Activated CD4-positive, alpha-beta memory T cell treated with anti-CD3 and anti-CD28 coated beads, Interleukin-2, amount 10 ng/mL, durations not matched to agents 7 days and 5 days (primary cell): ENCODE measurements at regions of chrX and their contacts with region 1.

Region 1: GRCh38 chrX:48737213-48737938 is 24.2 kb upstream of the GLOD5 start:
- DNase-seq: peak; percentile 91
- H3K4me3 Mint-ChIP-seq: peak overlapping the region; percentile 91
- H3K27ac Mint-ChIP-seq: peak overlapping the region; percentile 96
- H3K4me1 Mint-ChIP-seq: peaks cover 19% of the 10 kb centered on the region
- H3K27me3 Mint-ChIP-seq: no peaks in the 10 kb centered on the region

Region 2: DNA sequence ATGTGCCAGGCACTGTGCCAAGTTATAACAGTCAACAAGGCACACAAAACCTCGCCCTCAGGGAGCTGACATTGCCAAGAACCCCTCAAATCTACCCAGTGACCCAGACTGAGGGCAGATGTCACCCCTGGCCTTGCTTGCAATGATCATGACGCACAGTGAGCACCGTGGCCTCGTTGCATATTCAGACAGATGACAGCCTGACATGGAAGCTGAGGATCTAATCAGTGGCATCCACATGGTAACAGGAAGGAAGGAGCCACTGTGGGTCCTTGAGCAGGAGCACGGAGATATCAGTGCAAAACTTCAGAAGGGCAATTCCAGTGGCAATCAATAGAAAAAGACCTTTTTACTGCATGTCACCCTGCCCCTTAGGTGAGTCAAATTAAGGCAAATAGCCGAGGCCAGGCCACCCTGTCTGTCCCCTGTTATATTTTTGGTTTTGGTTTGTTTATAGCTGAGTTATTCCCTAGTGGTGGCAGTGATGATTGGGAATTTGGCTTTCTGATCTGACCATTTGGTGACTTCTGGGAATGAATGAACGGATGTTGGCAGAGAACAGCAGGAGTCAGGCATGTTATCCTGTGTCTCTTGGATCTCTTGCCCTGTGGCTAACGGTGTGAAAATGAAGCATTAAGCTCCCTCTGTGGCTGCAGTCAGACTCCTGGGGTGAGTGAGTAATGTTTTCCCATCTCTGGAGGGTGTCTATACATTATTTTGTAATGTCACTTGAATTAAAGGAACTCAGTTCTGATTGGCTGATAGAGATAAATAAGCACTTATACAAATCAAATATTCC is 119.6 kb before region 1 on chrX:
- CTCF ChIA-PET with region 1: no interaction called
- POLR2A ChIA-PET with region 1: no interaction called
- DNase-seq: no peak
- H3K4me3 Mint-ChIP-seq: no peak overlapping the region
- H3K27ac Mint-ChIP-seq: no peak overlapping the region
- H3K4me1 Mint-ChIP-seq: no peaks in the 10 kb centered on the region
- H3K27me3 Mint-ChIP-seq: no peaks in the 10 kb centered on the region

Region 3: GRCh38 chrX:48676106-48676892 is 61.1 kb before region 1 on chrX:
- CTCF ChIA-PET with region 1: no interaction called
- POLR2A ChIA-PET with region 1: interaction called, 14 read pairs
- DNase-seq: peak; percentile 90
- H3K4me3 Mint-ChIP-seq: peak overlapping the region; percentile 90
- H3K27ac Mint-ChIP-seq: peak overlapping the region; percentile 84
- H3K4me1 Mint-ChIP-seq: peaks cover 31% of the 10 kb centered on the region
- H3K27me3 Mint-ChIP-seq: no peaks in the 10 kb centered on the region

Region 4: GRCh38 chrX:48696301-48697181 is 40.8 kb before region 1 on chrX and contains the start of gene SUV39H1:
- CTCF ChIA-PET with region 1: interaction called, 4 read pairs
- POLR2A ChIA-PET with region 1: interaction called, 59 read pairs
- DNase-seq: peak; percentile 89
- H3K4me3 Mint-ChIP-seq: peak within 1 kb of the TSS; percentile 90
- H3K27ac Mint-ChIP-seq: peak within 1 kb of the TSS; percentile 97
- H3K4me1 Mint-ChIP-seq: peaks cover 49% of the 10 kb centered on the region
- H3K27me3 Mint-ChIP-seq: no peaks in the 10 kb centered on the region
- total RNA-seq, gene SUV39H1: 30.3 to 33.2 TPM

Region 5: GRCh38 chrX:48715072-48715471 is 22.3 kb before region 1 on chrX:
- CTCF ChIA-PET with region 1: no interaction called
- POLR2A ChIA-PET with region 1: interaction called, 47 read pairs
- DNase-seq: no peak
- H3K4me3 Mint-ChIP-seq: peak overlapping the region; percentile 74
- H3K27ac Mint-ChIP-seq: peak overlapping the region; percentile 98
- H3K4me1 Mint-ChIP-seq: peaks cover 74% of the 10 kb centered on the region
- H3K27me3 Mint-ChIP-seq: no peaks in the 10 kb centered on the region

Region 6: GRCh38 chrX:48720577-48721250 is 16.7 kb before region 1 on chrX:
- CTCF ChIA-PET with region 1: no interaction called
- POLR2A ChIA-PET with region 1: interaction called, 47 read pairs
- DNase-seq: no peak
- H3K4me3 Mint-ChIP-seq: no peak overlapping the region
- H3K27ac Mint-ChIP-seq: no peak overlapping the region
- H3K4me1 Mint-ChIP-seq: peaks cover 24% of the 10 kb centered on the region
- H3K27me3 Mint-ChIP-seq: no peaks in the 10 kb centered on the region

Region 7: GRCh38 chrX:48801280-48802088 is 64.1 kb after region 1 on chrX and contains the start of gene HDAC6:
- CTCF ChIA-PET with region 1: interaction called, 3 read pairs
- POLR2A ChIA-PET with region 1: interaction called, 34 read pairs
- DNase-seq: peak; percentile 96
- H3K4me3 Mint-ChIP-seq: peak within 1 kb of the TSS; percentile 97
- H3K27ac Mint-ChIP-seq: peak within 1 kb of the TSS; percentile 99
- H3K4me1 Mint-ChIP-seq: peaks cover 29% of the 10 kb centered on the region
- H3K27me3 Mint-ChIP-seq: no peaks in the 10 kb centered on the region
- total RNA-seq, gene HDAC6: 89.0 to 90.3 TPM

Region 8: GRCh38 chrX:48890934-48891401 is 153.6 kb after region 1 on chrX:
- CTCF ChIA-PET with region 1: no interaction called
- POLR2A ChIA-PET with region 1: no interaction called
- DNase-seq: no peak
- H3K4me3 Mint-ChIP-seq: peak overlapping the region; percentile 84
- H3K27ac Mint-ChIP-seq: peak overlapping the region; percentile 70
- H3K4me1 Mint-ChIP-seq: peaks cover 26% of the 10 kb centered on the region
- H3K27me3 Mint-ChIP-seq: no peaks in the 10 kb centered on the region